AG04449 (cell line): ENCODE measurements at regions of chr11 and their contacts with region 1.

Region 1: DNA sequence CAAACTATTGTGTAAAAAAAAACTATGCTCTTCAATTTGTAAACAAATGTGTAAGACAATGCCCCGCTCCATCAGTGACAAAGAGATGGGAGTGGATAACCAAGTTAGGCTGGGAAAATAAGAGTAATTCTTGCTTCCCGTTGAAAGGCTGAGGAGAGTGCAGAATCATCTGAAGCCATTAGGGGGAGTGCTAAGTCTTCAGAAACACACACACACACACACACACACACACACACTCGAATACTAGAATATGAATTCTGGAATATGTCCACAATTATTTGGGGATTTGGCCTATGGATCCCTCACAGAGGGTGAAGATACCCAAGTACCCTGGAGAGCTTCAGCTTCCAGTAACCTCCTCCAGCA is 27.8 kb upstream of the ROBO3 start:
- DNase-seq: peak; percentile 56
- H3K4me3 ChIP-seq: no peak overlapping the region
- CTCF ChIP-seq: peak; percentile 67

Region 2: DNA sequence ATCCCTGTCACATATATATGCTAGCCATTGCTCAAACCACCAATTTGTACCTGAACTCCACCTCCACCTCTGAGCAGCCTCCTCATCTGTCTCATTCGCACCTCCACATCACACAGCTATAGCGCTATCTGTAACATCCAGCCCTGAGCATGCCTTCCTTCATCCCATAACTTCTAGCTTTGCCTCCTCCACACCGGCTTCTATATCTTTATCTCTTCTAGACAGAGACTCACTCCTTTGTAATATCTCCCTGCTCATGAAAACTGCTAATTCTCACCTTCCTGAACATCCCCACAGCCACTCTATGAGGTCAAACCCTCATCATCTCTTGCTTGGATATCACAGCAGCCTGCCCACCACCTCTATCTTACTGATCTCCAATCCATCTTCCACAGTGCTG is 169.9 kb before region 1 on chr11:
- CTCF ChIA-PET with region 1: interaction called, 176 read pairs
- POLR2A ChIA-PET with region 1: no interaction called
- DNase-seq: no peak
- H3K4me3 ChIP-seq: no peak overlapping the region
- CTCF ChIP-seq: no peak

Region 3: DNA sequence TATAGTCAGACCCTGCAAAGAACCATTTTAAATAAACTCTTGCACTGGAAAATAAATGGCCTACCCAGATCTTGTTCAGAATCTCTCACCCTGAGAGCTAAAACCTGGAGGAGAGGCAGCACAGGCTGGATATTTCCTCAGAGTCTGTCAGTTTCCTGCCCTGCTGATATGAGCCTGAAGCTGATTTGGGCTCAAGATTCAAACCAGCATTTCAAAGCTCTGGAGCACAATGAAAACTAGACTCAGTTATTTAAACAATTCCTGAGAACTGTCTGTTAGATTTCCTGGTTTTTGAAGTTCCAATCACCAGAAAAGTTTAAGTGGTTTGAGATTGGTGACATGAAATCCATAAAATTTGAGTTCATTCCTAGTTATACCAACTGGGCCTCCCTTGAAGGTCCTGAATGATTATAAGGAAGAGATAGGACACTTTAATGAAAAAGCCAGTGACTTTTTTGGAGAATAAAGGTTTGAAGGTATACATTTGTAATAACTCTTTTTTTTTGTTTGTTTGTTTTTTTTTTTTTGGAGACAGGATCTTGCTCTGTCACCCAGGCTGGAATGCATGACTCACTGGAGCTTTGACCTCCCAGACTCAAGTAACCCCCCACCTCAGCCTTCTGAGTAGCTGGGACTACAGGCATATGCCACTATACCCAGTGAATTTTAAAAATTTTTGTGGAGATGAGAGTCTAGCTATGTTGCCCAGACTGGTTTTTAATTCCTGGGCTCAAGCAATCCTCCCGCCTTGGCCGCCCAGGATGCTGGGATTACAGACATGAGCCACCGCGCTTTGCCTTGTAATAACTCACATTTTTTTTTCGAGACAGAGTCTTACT is 67.5 kb before region 1 on chr11:
- CTCF ChIA-PET with region 1: interaction called, 23 read pairs
- POLR2A ChIA-PET with region 1: no interaction called
- DNase-seq: no peak
- H3K4me3 ChIP-seq: no peak overlapping the region
- CTCF ChIP-seq: no peak

Region 4: DNA sequence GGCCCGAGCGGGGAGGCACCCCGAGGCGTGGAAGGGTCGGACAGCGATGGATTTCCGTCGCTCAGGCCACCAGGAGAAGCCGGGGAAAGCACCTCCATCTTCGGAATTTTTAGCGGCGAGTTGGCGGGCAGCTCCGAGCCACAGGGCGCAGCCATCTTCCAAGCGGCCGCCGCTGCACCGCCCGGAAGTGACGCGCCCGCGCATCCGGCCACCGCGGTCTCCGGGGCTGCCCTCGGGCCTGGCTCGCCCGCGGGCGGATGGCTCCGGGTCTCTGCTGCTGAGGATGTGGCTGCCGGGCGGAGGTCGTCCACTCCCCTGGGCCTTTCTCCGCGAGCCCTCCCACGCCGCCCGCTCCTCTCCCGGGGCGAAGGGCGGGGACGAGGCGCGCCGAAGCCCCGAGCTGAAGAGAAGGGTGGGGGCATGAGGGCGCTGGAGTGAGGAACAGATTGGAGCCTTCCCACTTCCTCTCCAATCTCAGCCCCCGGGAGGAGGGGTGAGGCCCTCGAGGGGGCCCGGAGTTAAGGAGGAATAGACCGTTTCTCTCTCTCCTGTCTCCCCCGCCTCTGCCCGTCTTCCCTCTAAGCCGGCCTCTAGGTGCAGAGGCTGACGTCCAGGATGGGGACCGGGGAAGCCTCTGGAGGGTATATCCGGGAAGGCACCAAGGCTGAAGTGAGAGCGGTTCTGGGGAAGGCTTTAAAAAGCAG is 37.1 kb before region 1 on chr11 and contains the start of gene MSANTD2:
- CTCF ChIA-PET with region 1: interaction called, 38 read pairs
- POLR2A ChIA-PET with region 1: no interaction called
- DNase-seq: peak; percentile 17
- H3K4me3 ChIP-seq: peak within 1 kb of the TSS; percentile 82
- CTCF ChIP-seq: no peak

Region 5: GRCh38 chr11:124865921-124866583 is 28.6 kb after region 1 on chr11:
- CTCF ChIA-PET with region 1: interaction called, 58 read pairs
- POLR2A ChIA-PET with region 1: no interaction called
- DNase-seq: no peak
- H3K4me3 ChIP-seq: peak overlapping the region; percentile 38
- CTCF ChIP-seq: peak; percentile 86

Region 6: DNA sequence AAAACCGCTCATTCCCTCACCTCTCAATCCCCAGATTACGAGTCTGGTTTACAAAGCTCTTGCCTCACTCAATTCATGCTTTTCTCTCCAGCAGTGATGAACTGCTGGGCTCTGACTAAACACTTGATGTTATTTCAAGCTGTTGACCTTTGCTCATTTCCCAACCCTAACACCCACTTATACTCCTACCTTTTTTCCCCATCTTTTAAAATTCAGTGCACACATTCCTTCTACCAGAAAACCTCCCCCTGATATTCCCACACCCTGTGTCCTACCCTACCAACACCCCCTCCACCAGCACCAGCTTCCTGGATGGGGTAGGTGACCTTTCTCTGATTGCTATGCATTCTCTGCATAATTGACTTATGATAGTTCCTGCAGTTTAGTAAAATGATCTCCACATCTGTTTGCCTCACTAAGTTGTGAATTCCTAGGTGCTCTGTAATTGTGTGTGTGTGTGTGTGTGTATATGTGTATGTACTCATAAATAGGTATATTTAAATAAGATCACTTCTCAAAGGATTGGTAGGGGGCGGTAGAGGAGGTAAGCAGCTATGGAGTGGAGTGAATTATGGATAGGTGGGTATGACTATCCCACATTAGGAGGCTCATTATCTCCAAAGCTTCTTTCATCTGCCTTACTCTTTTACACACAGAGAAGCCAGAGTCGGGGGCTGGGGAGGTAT is 97.5 kb after region 1 on chr11:
- CTCF ChIA-PET with region 1: interaction called, 16 read pairs
- POLR2A ChIA-PET with region 1: no interaction called
- DNase-seq: peak; percentile 72
- H3K4me3 ChIP-seq: no peak overlapping the region
- CTCF ChIP-seq: no peak